CD8-positive, alpha-beta T cell (primary cell): ENCODE measurements at regions of chr17 and their contacts with region 1.

Region 1: GRCh38 chr17:14300575-14301278 is at the start of gene HS3ST3B1:
- DNase-seq: peak; percentile 98 to 100 (median 99)
- ATAC-seq: peak; percentile 87
- H3K4me3 ChIP-seq: peak within 1 kb of the TSS; percentile 80 to 92
- H3K4me3 Mint-ChIP-seq: peak within 1 kb of the TSS; percentile 97
- H3K27ac ChIP-seq: peak within 1 kb of the TSS; percentile 72 to 88
- H3K27ac Mint-ChIP-seq: peak within 1 kb of the TSS; percentile 96
- H3K4me1 ChIP-seq: peaks cover 51% of the 10 kb centered on the region
- H3K4me1 Mint-ChIP-seq: peaks cover 57% of the 10 kb centered on the region
- H3K27me3 ChIP-seq: peaks cover 13 to 23% of the 10 kb centered on the region in 2 experiments
- H3K27me3 Mint-ChIP-seq: peaks cover 32% of the 10 kb centered on the region
- CTCF ChIP-seq: peak; percentile 16
- total RNA-seq, gene HS3ST3B1: 8.1 to 8.4 TPM

Region 2: DNA sequence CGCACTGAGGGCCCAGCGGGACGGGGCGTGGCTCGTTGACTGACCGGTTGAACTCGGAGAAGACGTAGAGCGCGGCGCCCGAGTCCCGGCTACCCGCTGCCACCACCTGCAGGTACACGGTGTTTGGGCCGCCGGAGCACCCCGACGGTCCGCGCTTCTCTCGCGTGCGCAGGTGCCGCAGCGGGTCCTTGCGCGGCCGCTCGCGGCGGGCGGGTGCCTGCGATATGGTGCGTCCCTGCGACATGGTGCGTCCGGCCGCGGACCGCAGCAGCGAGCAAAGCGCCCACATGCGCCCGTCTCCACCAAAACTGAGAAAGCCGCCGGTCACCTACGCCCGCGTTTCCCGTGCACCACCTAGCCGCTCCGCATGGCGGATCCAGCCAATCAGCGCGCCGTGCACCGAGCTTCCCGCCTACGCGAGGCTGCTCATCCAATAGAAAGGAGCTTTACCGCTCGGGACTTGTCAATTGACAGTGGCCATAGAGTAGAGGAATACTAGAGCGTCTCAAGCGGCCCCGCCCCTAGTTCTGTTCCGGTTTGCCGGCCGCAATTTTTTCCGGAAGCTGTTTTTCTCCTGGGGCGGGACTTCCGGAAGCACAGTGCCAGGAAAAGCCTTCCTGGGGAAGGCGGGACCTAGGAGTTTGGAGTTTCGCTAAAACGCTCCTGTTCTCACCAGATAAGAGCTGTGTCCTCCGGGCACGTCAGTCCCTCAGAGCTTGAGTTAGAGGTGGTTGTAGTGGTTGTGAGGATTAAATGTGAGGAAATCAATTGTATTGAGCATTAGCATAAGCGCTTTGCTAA is 1282.9 kb before region 1 on chr17 and contains the start of gene ELAC2:
- CTCF ChIA-PET with region 1: no interaction called
- POLR2A ChIA-PET with region 1: interaction called, 6 read pairs
- intact Hi-C with region 1: loop called (anchors 5 kb)
- DNase-seq: peak; percentile 90 to 98 (median 94)
- ATAC-seq: peak; percentile 98
- H3K4me3 ChIP-seq: peak within 1 kb of the TSS; percentile 62 to 71
- H3K4me3 Mint-ChIP-seq: peak within 1 kb of the TSS; percentile 99
- H3K27ac ChIP-seq: peak within 1 kb of the TSS; percentile 43 to 76
- H3K27ac Mint-ChIP-seq: peak within 1 kb of the TSS; percentile 97
- H3K4me1 ChIP-seq: peaks cover 13% of the 10 kb centered on the region
- H3K4me1 Mint-ChIP-seq: peaks cover 40% of the 10 kb centered on the region
- H3K27me3 ChIP-seq: no peaks in the 10 kb centered on the region
- H3K27me3 Mint-ChIP-seq: no peaks in the 10 kb centered on the region
- CTCF ChIP-seq: no peak
- total RNA-seq, gene ELAC2: 66.7 to 74.0 TPM

Region 3: DNA sequence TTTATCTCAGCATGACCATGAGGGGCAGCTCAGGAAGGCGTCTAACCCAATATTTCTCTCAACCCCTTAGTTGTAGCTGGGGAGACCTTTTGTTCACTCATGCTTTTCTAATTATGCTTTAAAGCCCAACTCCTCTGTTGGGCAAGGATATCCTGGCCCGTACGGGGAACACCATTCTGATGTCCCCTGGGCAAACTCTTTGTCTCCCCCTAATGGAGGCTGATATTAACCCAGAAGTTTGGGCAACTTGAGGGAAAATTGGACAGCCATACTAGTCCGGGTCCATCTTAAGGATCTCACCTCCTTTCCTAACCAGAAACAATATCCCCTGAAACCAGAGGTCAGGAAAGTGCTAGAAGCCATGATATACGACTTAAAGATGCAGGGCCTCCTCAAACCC is 375.1 kb before region 1 on chr17:
- CTCF ChIA-PET with region 1: no interaction called
- POLR2A ChIA-PET with region 1: no interaction called
- intact Hi-C with region 1: loop called in 1 of 2 experiments (anchors 10 kb)
- DNase-seq: no peak
- ATAC-seq: no peak
- H3K4me3 ChIP-seq: no peak overlapping the region
- H3K4me3 Mint-ChIP-seq: no peak overlapping the region
- H3K27ac ChIP-seq: no peak overlapping the region
- H3K27ac Mint-ChIP-seq: no peak overlapping the region
- H3K4me1 ChIP-seq: no peaks in the 10 kb centered on the region
- H3K4me1 Mint-ChIP-seq: no peaks in the 10 kb centered on the region
- H3K27me3 ChIP-seq: no peaks in the 10 kb centered on the region
- H3K27me3 Mint-ChIP-seq: no peaks in the 10 kb centered on the region
- CTCF ChIP-seq: no peak

Region 4: GRCh38 chr17:14203388-14203787 is 97.3 kb before region 1 on chr17:
- CTCF ChIA-PET with region 1: interaction called, 21 read pairs
- POLR2A ChIA-PET with region 1: interaction called, 74 read pairs
- intact Hi-C with region 1: loop called (anchors 1 to 2 kb)
- DNase-seq: peak in 5 of 9 experiments; percentile 41 to 70 (median 56)
- ATAC-seq: peak; percentile 40
- H3K4me3 ChIP-seq: no peak overlapping the region
- H3K4me3 Mint-ChIP-seq: no peak overlapping the region
- H3K27ac ChIP-seq: peak overlapping the region; percentile 34 to 66
- H3K27ac Mint-ChIP-seq: peak overlapping the region; percentile 81
- H3K4me1 ChIP-seq: peaks cover 85% of the 10 kb centered on the region
- H3K4me1 Mint-ChIP-seq: peaks cover 83% of the 10 kb centered on the region
- H3K27me3 ChIP-seq: no peaks in the 10 kb centered on the region
- H3K27me3 Mint-ChIP-seq: no peaks in the 10 kb centered on the region
- CTCF ChIP-seq: peak; percentile 63

Region 5: DNA sequence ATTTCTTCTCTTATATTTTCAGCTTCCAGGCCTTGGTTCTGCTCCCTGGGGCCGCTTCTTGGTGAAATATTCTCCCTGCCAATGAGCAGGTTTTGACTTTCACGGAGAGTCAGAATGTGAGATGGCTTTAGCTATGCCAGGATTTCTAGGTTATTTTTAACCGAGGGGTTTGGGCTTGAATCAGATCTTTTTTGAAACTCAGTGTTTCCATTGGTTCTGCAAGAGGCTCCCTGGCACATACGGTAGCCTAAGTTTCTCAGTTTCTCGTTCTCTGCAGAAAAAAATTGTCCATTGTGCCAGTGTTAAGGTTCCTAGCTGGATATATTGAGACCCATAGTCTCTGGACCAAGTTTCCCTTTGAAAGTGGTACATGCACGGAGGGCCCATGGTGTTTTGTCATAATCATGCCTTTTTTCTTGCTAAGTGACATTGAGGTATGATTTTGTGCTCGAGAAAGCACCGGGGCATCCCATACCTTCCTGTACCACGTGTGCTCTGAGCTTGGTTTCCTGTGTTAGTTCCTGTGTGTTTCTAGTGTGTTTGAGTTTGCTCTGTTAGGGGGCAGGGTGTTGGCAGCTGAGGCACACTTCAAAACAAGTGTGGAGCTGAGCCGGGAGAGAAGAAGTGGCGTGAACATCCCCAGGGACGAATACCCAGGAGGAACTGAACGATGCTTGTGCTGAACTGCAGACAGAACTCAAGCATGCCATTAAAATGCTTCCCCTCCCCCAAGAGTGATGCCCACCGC is 127.3 kb after region 1 on chr17:
- CTCF ChIA-PET with region 1: interaction called, 23 read pairs
- POLR2A ChIA-PET with region 1: interaction called, 48 read pairs
- intact Hi-C with region 1: loop called in 1 of 2 experiments (anchors 1 kb)
- DNase-seq: peak; percentile 18 to 90 (median 63)
- ATAC-seq: peak; percentile 97
- H3K4me3 ChIP-seq: peak overlapping the region; percentile 30 to 48
- H3K4me3 Mint-ChIP-seq: peak overlapping the region; percentile 76
- H3K27ac ChIP-seq: peak overlapping the region; percentile 25 to 67
- H3K27ac Mint-ChIP-seq: peak overlapping the region; percentile 90
- H3K4me1 ChIP-seq: peaks cover 44% of the 10 kb centered on the region
- H3K4me1 Mint-ChIP-seq: peaks cover 66% of the 10 kb centered on the region
- H3K27me3 ChIP-seq: no peaks in the 10 kb centered on the region
- H3K27me3 Mint-ChIP-seq: no peaks in the 10 kb centered on the region
- CTCF ChIP-seq: no peak

Region 6: GRCh38 chr17:14926526-14927122 is 625.9 kb after region 1 on chr17:
- CTCF ChIA-PET with region 1: interaction called, 12 read pairs
- POLR2A ChIA-PET with region 1: no interaction called
- intact Hi-C with region 1: loop called in 1 of 2 experiments (anchors 2 kb)
- DNase-seq: peak; percentile 13 to 75 (median 56)
- ATAC-seq: no peak
- H3K4me3 ChIP-seq: no peak overlapping the region
- H3K4me3 Mint-ChIP-seq: no peak overlapping the region
- H3K27ac ChIP-seq: no peak overlapping the region
- H3K27ac Mint-ChIP-seq: no peak overlapping the region
- H3K4me1 ChIP-seq: no peaks in the 10 kb centered on the region
- H3K4me1 Mint-ChIP-seq: no peaks in the 10 kb centered on the region
- H3K27me3 ChIP-seq: peaks cover 0 to 3% of the 10 kb centered on the region in 2 experiments
- H3K27me3 Mint-ChIP-seq: peaks cover 14% of the 10 kb centered on the region
- CTCF ChIP-seq: peak; percentile 91